Vagina (tissue), 2 donors: ENCODE measurements at regions of chr9 and their contacts with region 1.

Region 1: GRCh38 chr9:91790917-91791316 is 159.1 kb downstream of the ROR2 start:
- DNase-seq: no peak
- H3K4me3 ChIP-seq: no peak overlapping the region
- H3K27ac ChIP-seq: no peak overlapping the region
- H3K4me1 ChIP-seq: peaks cover 7% of the 10 kb centered on the region
- H3K27me3 ChIP-seq: no peaks in the 10 kb centered on the region
- CTCF ChIP-seq: no peak
- POLR2A ChIP-seq: no peak

Region 2: GRCh38 chr9:91623004-91623403 is 167.9 kb before region 1 on chr9:
- intact Hi-C with region 1: loop called (anchors 5 kb)
- DNase-seq: no peak
- H3K4me3 ChIP-seq: no peak overlapping the region
- H3K27ac ChIP-seq: no peak overlapping the region
- H3K4me1 ChIP-seq: no peaks in the 10 kb centered on the region
- H3K27me3 ChIP-seq: no peaks in the 10 kb centered on the region
- CTCF ChIP-seq: no peak
- POLR2A ChIP-seq: no peak